ENCODE measurements at regions of chr17 and their contacts with region 1.

Region 1: GRCh38 chr17:27265333-27265732 is 28.6 kb upstream of the WSB1 start:
- DNase-seq: no peak
- ATAC-seq: peak in 1 of 2 donors; percentile 56
- H3K4me3 ChIP-seq: no peak overlapping the region
- H3K27ac ChIP-seq: no peak overlapping the region
- H3K4me1 ChIP-seq: no peaks in the 10 kb centered on the region
- H3K27me3 ChIP-seq: no peaks in the 10 kb centered on the region

Region 2: DNA sequence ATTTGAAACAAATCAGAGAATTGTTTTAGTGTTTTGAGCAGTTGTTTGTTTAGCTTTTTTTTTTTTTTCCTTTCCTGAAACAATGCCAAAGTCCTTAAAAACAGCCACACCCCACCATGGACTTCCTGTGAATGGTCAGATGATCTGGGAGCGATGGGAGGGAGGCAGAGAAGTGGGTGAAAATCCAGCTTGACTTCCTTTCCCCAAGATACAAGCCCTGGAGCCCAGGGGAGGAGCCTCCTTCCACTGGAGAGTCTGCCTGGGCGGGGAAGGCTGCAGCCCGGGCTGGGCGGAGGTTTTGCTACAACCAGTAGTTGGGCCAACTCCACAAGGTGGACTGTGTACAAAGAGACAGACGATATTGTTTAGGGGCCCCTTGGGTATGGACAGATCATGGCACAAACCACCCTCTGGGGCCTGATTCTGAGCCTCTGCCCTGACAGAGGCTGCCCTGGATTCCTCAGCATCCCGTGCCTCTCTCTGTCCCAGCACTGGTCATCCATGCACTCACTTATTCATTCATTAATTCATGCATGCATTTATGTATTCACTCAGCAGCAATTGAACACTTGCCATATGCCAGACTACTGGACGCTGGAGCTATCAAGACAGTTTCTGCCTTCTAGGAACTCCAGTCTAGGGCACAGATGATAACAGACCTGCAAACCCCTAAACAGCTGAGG is 58.3 kb after region 1 on chr17:
- intact Hi-C with region 1: loop called in 1 of 4 experiments (anchors 5 kb)
- DNase-seq: peak; percentile 88 to 94 (median 92)
- ATAC-seq: peak; percentile 87 to 92
- H3K4me3 ChIP-seq: no peak overlapping the region
- H3K27ac ChIP-seq: peak overlapping the region; percentile 59
- H3K4me1 ChIP-seq: peaks cover 19% of the 10 kb centered on the region
- H3K27me3 ChIP-seq: no peaks in the 10 kb centered on the region

Measured in right cardiac atrium (tissue), 5 donors.